Thyroid gland (tissue), 4 donors: ENCODE measurements at regions of chr12 and their contacts with region 1.

Region 1: GRCh38 chr12:6873094-6874014 is at the start of gene SPSB2:
- DNase-seq: peak; percentile 99
- H3K4me3 ChIP-seq: peak within 1 kb of the TSS; percentile 55 to 81 (median 66)
- H3K27ac ChIP-seq: peak within 1 kb of the TSS; percentile 31 to 87 (median 53)
- H3K4me1 ChIP-seq: peaks cover 19 to 36% of the 10 kb centered on the region in 2 donors
- H3K27me3 ChIP-seq: no peaks in the 10 kb centered on the region
- CTCF ChIP-seq: no peak
- POLR2A ChIP-seq: peak; percentile 22 to 86
- total RNA-seq, gene SPSB2: 16.3 to 35.0 (median 25.6) TPM

Region 2: GRCh38 chr12:6461401-6462233 is 411.7 kb before region 1 on chr12:
- intact Hi-C with region 1: no loop called
- DNase-seq: peak in 1 of 2 donors; percentile 20
- H3K4me3 ChIP-seq: no peak overlapping the region
- H3K27ac ChIP-seq: peak overlapping the region in 1 of 3 donors; percentile 45
- H3K4me1 ChIP-seq: no peaks in the 10 kb centered on the region
- H3K27me3 ChIP-seq: no peaks in the 10 kb centered on the region
- CTCF ChIP-seq: no peak
- POLR2A ChIP-seq: no peak

Region 3: DNA sequence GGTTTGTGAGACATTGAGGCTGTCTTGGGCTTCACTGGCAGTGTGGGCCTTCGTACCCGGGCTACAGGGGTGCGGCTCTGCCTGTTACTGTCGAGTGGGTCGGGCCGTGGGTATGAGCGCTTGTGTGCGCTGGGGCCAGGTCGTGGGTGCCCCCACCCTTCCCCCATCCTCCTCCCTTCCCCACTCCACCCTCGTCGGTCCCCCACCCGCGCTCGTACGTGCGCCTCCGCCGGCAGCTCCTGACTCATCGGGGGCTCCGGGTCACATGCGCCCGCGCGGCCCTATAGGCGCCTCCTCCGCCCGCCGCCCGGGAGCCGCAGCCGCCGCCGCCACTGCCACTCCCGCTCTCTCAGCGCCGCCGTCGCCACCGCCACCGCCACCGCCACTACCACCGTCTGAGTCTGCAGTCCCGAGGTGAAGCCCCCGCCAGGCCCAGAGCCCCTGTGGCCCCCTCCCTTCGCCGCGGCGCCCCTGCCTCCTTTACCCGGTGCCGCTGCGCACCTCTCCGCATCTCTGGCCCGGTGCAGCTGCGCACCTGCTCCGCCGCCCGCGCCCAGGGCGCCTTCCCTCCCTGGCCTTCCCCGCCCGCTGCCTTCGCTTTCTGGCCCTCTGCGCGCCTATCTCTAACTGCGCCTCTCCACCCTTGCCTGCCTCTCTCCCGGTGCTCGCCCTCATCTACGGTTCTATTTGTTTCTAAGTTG is 41.0 kb after region 1 on chr12 and contains the start of gene ENO2:
- intact Hi-C with region 1: loop called (anchors 5 kb)
- DNase-seq: peak; percentile 76 to 77
- H3K4me3 ChIP-seq: peak within 1 kb of the TSS; percentile 24 to 61 (median 34)
- H3K27ac ChIP-seq: peak within 1 kb of the TSS; percentile 50 to 76 (median 76)
- H3K4me1 ChIP-seq: peaks cover 26 to 32% of the 10 kb centered on the region in 2 donors
- H3K27me3 ChIP-seq: no peaks in the 10 kb centered on the region
- CTCF ChIP-seq: no peak
- POLR2A ChIP-seq: peak in 1 of 2 donors; percentile 61
- total RNA-seq, gene ENO2: 13.0 to 25.3 (median 19.8) TPM

Region 4: DNA sequence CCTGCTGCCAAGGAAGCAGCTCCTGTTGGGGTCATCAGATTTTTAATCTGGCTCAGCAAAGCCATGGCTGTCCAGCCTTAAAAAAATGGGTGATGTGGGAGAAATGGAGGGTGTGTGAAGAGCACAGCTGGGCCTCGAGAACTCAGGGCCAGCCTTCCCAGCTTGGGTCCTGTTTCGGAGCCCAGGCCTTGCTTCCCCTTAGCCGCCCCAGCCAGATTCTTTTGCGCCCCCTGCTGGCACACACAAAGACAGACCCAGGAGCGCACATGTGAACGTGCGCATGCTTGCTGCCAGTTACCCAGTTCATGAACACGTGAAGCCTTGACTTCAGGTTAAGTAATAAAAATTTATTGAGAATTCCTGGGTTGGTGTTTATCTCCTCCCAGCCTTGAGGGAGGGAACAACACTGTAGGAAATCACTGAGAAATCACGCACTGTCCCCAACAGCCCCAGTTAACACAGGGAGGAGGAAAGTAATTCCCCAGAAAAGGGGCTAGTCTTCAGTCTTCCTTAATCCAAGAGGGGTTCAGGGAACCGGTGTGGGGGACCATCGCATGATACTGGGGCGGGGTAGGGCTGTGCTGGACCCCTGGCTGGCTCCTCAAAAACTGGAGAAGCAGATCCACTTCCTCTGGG is 91.8 kb after region 1 on chr12:
- intact Hi-C with region 1: loop called (anchors 5 kb)
- DNase-seq: peak; percentile 86 to 91
- H3K4me3 ChIP-seq: peak overlapping the region in 1 of 3 donors; percentile 68
- H3K27ac ChIP-seq: peak overlapping the region; percentile 14 to 97 (median 79)
- H3K4me1 ChIP-seq: peaks cover 47 to 54% of the 10 kb centered on the region in 2 donors
- H3K27me3 ChIP-seq: no peaks in the 10 kb centered on the region
- CTCF ChIP-seq: peak; percentile 77 to 88 (median 85)
- POLR2A ChIP-seq: no peak